ENCODE measurements at regions of chr15 and their contacts with region 1.

Region 1: DNA sequence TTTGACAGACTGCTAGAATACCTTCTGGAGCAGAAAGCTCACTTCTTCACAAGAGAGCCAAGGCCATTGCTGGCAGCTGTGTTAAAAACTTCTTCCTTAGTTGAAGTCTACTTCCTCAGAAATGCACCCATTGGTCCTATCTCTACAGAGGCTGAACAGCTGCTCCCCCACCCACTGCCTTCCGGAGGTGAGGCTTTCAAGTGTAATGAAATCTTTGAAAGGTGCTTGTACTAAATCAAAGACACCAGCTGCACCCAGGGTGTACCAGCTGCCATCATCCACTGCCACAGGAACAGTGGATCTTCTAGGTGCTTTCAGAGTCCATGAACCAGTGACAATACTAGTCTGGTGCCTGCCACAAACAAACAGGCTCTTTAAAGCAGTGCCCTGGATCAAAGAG is 26.4 kb upstream of the HERC1 start:
- DNase-seq: peak; percentile 73
- ATAC-seq: peak; percentile 95
- H3K4me3 ChIP-seq: peak overlapping the region in 1 of 5 experiments; percentile 24
- H3K4me3 Mint-ChIP-seq: peak overlapping the region; percentile 52
- H3K27ac ChIP-seq: peak overlapping the region; percentile 71 to 76
- H3K27ac Mint-ChIP-seq: peak overlapping the region; percentile 89
- H3K4me1 ChIP-seq: peaks cover 31 to 32% of the 10 kb centered on the region in 2 donors
- H3K4me1 Mint-ChIP-seq: peaks cover 31% of the 10 kb centered on the region
- H3K27me3 ChIP-seq: no peaks in the 10 kb centered on the region
- H3K27me3 Mint-ChIP-seq: no peaks in the 10 kb centered on the region
- CTCF ChIP-seq: no peak

Region 2: GRCh38 chr15:63870403-63871209 is 10.5 kb after region 1 on chr15:
- CTCF ChIA-PET with region 1: interaction called, 10 read pairs
- POLR2A ChIA-PET with region 1: no interaction called
- intact Hi-C with region 1: no loop called
- DNase-seq: no peak
- ATAC-seq: no peak
- H3K4me3 ChIP-seq: no peak overlapping the region
- H3K4me3 Mint-ChIP-seq: no peak overlapping the region
- H3K27ac ChIP-seq: no peak overlapping the region
- H3K27ac Mint-ChIP-seq: peak overlapping the region; percentile 50
- H3K4me1 ChIP-seq: peaks cover 9 to 12% of the 10 kb centered on the region in 2 donors
- H3K4me1 Mint-ChIP-seq: peaks cover 13% of the 10 kb centered on the region
- H3K27me3 ChIP-seq: no peaks in the 10 kb centered on the region
- H3K27me3 Mint-ChIP-seq: no peaks in the 10 kb centered on the region
- CTCF ChIP-seq: no peak

Region 3: GRCh38 chr15:63881431-63881830 is 21.3 kb after region 1 on chr15:
- CTCF ChIA-PET with region 1: interaction called, 4 read pairs
- POLR2A ChIA-PET with region 1: interaction called, 3 read pairs
- intact Hi-C with region 1: loop called (anchors 2 kb)
- DNase-seq: peak; percentile 69
- ATAC-seq: peak; percentile 84
- H3K4me3 ChIP-seq: peak overlapping the region in 1 of 5 experiments; percentile 25
- H3K4me3 Mint-ChIP-seq: peak overlapping the region; percentile 69
- H3K27ac ChIP-seq: no peak overlapping the region
- H3K27ac Mint-ChIP-seq: peak overlapping the region; percentile 69
- H3K4me1 ChIP-seq: peaks cover 29% of the 10 kb centered on the region in 2 donors
- H3K4me1 Mint-ChIP-seq: peaks cover 42% of the 10 kb centered on the region
- H3K27me3 ChIP-seq: no peaks in the 10 kb centered on the region
- H3K27me3 Mint-ChIP-seq: no peaks in the 10 kb centered on the region
- CTCF ChIP-seq: no peak

Region 4: GRCh38 chr15:63891079-63891767 is 31.1 kb after region 1 on chr15:
- CTCF ChIA-PET with region 1: interaction called, 11 read pairs
- POLR2A ChIA-PET with region 1: no interaction called
- intact Hi-C with region 1: no loop called
- DNase-seq: peak; percentile 84
- ATAC-seq: peak; percentile 67
- H3K4me3 ChIP-seq: no peak overlapping the region
- H3K4me3 Mint-ChIP-seq: no peak overlapping the region
- H3K27ac ChIP-seq: no peak overlapping the region
- H3K27ac Mint-ChIP-seq: peak overlapping the region; percentile 37
- H3K4me1 ChIP-seq: peaks cover 30 to 35% of the 10 kb centered on the region in 2 donors
- H3K4me1 Mint-ChIP-seq: peaks cover 37% of the 10 kb centered on the region
- H3K27me3 ChIP-seq: no peaks in the 10 kb centered on the region
- H3K27me3 Mint-ChIP-seq: no peaks in the 10 kb centered on the region
- CTCF ChIP-seq: peak; percentile 95

Measured in B cell (primary cell).